Head of caudate nucleus (tissue), 42 donors: ENCODE measurements at regions of chr16 and their contacts with region 1.

Region 1: GRCh38 chr16:85275533-85276249 is 163.4 kb upstream of the CIBAR2 start:
- DNase-seq: peak; percentile 60 to 94 (median 86)

Region 2: DNA sequence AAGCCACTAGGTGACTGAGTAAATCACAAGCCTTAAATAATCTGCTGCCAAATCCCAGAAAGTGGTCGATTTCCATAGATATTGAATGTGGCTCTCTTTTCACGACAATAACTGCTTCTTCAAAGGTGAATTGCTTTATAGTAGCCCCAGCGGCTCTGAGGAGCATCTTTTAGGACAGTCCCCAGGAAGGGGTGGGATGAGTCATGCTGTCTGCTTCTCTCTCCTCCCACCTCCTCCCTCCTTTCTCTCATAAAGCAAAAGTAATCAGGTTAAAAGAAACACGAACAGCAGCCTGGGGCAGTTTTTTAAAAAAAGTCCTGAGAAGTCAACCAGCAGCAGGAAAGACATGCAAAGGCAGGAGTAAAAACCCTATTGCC is 246.3 kb before region 1 on chr16:
- intact Hi-C with region 1: no loop called
- DNase-seq: peak in 23 of 42 donors; percentile 14 to 80 (median 42)

Region 3: DNA sequence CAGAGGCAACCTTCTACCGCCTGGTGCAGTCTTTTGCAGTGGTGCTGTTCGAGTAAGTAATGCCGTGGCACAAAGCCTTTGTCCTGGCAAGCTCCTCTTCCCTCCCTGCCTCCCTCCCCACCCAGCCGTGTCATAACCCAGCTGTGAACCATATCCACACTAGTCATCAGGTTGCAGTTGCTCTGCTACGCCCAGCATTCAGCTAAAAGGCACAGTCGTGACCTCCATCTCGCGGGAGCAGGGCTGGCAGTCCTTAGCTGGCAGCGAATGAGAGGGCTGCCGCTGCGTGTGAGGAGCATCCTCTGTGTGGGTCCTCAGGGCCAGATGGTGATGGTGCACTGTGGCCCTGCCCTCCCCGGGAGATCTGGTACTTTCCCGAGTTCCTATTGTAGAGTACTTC is 202.7 kb before region 1 on chr16:
- intact Hi-C with region 1: no loop called
- DNase-seq: peak in 1 of 42 donors; percentile 14

Region 4: GRCh38 chr16:85420501-85421337 is 145.0 kb after region 1 on chr16:
- intact Hi-C with region 1: loop called (anchors 10 kb)
- DNase-seq: peak in 22 of 42 donors; percentile 9 to 69 (median 36)

Region 5: DNA sequence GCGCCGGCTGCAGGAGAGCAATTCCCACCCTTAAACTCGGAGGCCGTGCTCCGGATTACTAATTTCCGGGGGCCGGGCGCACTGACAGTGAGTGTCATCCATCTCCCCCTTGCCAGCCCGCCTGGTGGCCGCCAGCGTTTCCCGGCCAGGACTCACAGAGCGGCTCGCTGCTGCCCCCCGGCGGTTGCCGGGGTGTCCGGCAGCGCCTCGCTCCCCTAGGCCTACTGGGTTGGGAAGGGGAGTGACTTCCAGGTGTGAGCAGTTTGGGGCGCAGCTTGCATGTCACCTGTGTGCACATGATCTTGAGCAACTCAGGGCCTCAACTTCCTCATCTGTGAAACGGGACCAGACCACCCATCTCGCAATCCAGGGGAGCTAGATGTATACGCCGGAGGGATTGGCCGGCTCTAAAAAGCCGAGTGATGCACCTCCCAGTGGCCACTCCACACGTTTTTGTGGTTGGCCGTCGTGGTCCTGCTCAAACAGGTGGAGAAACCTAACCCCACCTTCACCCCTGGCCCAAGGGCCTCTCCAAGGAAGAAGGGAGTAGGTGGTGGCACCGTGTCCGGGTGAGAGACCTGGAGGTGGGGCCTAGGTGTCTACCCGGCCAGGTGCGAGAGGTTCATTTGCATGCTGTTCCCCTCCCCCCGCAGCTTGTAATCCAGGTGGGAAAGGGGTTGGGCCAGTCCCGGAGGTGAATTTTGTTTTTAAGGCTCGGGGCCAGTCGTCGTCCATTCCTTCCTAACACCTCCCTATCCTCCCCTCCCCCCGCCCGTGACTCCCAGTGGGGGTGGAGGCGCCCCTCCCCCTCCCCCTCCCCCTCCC is 335.0 kb after region 1 on chr16:
- intact Hi-C with region 1: loop called (anchors 1 kb)
- DNase-seq: peak; percentile 73 to 95 (median 88)